IMR-90 (cell line): ENCODE measurements at regions of chr22 and their contacts with region 1.

Region 1: DNA sequence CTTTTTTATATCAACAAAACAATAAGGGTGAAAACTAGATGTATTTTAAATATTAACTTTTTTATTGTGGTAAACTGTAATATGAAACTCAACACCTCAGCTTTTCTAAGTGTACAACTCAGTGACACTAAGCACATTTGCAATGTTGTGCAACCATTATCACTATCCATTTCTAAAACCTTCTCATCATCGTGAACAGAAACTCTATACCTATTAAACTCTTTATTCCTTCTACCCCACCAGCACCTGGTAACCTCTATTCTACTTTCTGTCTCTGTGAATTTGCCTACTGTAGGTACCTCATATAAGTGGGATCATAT is 9.4 kb downstream of the HORMAD2 start:
- DNase-seq: no peak
- ATAC-seq: no peak
- H3K4me3 ChIP-seq: no peak overlapping the region
- H3K27ac ChIP-seq: no peak overlapping the region; the same call in 1 of the 2 replicates
- H3K4me1 ChIP-seq: no peaks in the 10 kb centered on the region
- H3K27me3 ChIP-seq: no peaks in the 10 kb centered on the region
- CTCF ChIP-seq: no peak
- POLR2A ChIP-seq: no peak
- RAD21 ChIP-seq: no peak

Region 2: DNA sequence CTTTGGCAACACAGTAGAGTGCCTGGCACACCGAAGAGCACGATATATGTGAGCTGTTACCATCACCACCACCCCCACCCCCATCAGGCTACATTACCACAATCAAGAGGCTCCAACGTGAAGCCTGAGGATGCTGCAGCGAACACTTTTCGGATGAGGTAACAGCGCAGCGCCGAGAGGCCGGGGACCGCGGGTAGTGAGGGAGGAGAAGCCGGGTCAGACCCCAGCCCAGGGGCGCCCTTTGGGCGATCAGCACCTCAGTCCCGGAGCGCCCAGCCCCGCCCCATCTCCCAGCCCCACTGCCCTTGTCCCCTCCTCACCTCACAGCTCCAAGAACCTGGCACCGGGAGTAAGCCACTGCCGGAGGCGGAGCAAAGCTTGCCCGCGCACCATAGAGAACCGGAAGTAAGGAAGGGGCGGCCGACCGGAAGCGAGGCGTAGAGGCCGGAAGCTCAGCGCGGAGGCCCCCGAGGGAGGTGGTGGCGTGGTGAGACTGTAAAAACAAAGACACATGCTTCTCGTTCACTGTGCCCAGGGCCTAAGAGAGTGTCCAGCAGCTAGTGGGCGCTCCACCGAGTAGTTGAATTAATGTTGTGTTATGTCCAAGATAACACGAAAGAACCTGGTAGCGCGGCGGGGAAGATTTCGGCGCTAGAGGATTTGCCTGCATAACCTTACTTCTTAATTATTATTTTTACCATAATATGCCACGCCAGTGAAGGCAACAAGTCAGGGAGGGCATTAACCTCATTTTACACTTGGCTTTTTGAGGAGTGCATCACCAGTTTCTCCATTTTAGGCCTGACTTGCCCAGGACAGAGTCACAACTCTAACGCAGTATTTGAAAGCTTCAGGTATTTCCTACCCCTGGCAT is 536.0 kb before region 1 on chr22 and contains the start of gene THOC5:
- CTCF ChIA-PET with region 1: no interaction called
- POLR2A ChIA-PET with region 1: no interaction called
- dilution Hi-C with region 1: no loop called
- in situ Hi-C with region 1: no loop called
- intact Hi-C with region 1: loop called (anchors 1 kb)
- DNase-seq: peak; percentile 94
- ATAC-seq: peak; percentile 97
- H3K4me3 ChIP-seq: peak within 1 kb of the TSS; percentile 88
- H3K27ac ChIP-seq: peak within 1 kb of the TSS; percentile 62
- H3K4me1 ChIP-seq: no peaks in the 10 kb centered on the region; the same call in 1 of the 2 replicates
- H3K27me3 ChIP-seq: no peaks in the 10 kb centered on the region
- CTCF ChIP-seq: peak; percentile 76
- POLR2A ChIP-seq: peak; percentile 67; the same call in 1 of the 2 replicates
- RAD21 ChIP-seq: peak; percentile 38; the same call in 1 of the 2 replicates
- total RNA-seq, gene THOC5: 61.1 and 73.7 TPM in 2 replicates

Region 3: GRCh38 chr22:29635734-29636357 is 453.8 kb before region 1 on chr22:
- CTCF ChIA-PET with region 1: no interaction called
- POLR2A ChIA-PET with region 1: no interaction called
- dilution Hi-C with region 1: no loop called
- in situ Hi-C with region 1: loop called (anchors 10 kb)
- intact Hi-C with region 1: loop called (anchors 1 kb)
- DNase-seq: peak; percentile 73
- ATAC-seq: peak; percentile 88
- H3K4me3 ChIP-seq: no peak overlapping the region
- H3K27ac ChIP-seq: no peak overlapping the region
- H3K4me1 ChIP-seq: peaks cover 8% of the 10 kb centered on the region
- H3K27me3 ChIP-seq: no peaks in the 10 kb centered on the region
- CTCF ChIP-seq: peak; percentile 72
- POLR2A ChIP-seq: no peak
- RAD21 ChIP-seq: peak; percentile 73

Region 4: DNA sequence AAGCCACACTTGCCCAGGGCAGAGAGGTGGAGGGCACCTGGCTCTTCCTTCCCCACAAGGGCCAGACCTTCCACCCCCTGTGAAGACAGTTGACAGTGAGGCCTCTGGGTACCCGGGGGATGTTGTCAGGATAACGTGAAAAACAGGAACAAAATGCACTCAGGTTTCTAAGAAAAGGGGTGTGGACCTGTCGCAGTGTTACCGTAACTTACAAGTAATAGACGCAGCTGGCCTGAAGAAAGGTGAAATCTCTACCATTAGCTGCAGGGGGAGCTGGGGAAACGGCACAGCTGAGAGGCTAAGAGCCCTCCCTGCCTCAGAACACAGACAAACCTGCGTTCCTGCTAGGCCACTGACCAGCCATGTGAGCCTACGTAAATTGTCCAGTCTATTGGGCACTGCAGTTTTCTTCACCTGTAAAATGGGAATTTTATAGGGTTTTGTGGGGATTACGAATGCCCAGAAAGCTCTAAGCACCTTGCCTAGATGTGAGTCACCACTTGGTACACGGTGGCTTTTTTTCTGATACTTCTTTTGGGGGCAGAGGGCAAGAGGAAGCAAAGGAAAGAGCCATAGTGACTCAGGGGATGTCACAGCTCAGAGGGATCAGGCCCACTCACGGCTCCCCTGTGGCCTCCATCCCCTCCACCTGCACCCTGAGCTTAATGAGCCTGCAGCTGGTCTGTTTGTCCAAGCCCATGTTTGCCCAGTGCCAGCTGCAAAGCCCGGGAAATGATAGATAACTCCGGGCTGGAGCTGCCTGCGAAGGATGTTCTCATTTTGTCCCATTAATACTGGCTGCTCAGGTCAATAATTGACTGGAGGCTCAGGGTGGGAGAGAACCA is 388.2 kb before region 1 on chr22:
- CTCF ChIA-PET with region 1: no interaction called
- POLR2A ChIA-PET with region 1: no interaction called
- dilution Hi-C with region 1: no loop called
- in situ Hi-C with region 1: no loop called
- intact Hi-C with region 1: loop called (anchors 5 kb)
- DNase-seq: peak; percentile 34
- ATAC-seq: no peak
- H3K4me3 ChIP-seq: no peak overlapping the region
- H3K27ac ChIP-seq: no peak overlapping the region
- H3K4me1 ChIP-seq: peaks cover 14% of the 10 kb centered on the region
- H3K27me3 ChIP-seq: peaks cover 3% of the 10 kb centered on the region; the same call in 1 of the 2 replicates
- CTCF ChIP-seq: 0 out of 2 replicates have a peak, but pooled peaks have one; percentile 16
- POLR2A ChIP-seq: no peak
- RAD21 ChIP-seq: no peak

Region 5: GRCh38 chr22:30253205-30253852 is 163.7 kb after region 1 on chr22:
- CTCF ChIA-PET with region 1: no interaction called
- POLR2A ChIA-PET with region 1: no interaction called
- dilution Hi-C with region 1: no loop called
- in situ Hi-C with region 1: no loop called
- intact Hi-C with region 1: loop called (anchors 1 kb)
- DNase-seq: peak; percentile 83
- ATAC-seq: peak; percentile 3
- H3K4me3 ChIP-seq: no peak overlapping the region
- H3K27ac ChIP-seq: peak overlapping the region; percentile 76
- H3K4me1 ChIP-seq: peaks cover 42% of the 10 kb centered on the region
- H3K27me3 ChIP-seq: no peaks in the 10 kb centered on the region
- CTCF ChIP-seq: no peak
- POLR2A ChIP-seq: no peak; the same call in 1 of the 2 replicates
- RAD21 ChIP-seq: no peak